Gastrocnemius medialis (tissue), 4 donors: ENCODE measurements at regions of chr15 and their contacts with region 1.

Region 1: DNA sequence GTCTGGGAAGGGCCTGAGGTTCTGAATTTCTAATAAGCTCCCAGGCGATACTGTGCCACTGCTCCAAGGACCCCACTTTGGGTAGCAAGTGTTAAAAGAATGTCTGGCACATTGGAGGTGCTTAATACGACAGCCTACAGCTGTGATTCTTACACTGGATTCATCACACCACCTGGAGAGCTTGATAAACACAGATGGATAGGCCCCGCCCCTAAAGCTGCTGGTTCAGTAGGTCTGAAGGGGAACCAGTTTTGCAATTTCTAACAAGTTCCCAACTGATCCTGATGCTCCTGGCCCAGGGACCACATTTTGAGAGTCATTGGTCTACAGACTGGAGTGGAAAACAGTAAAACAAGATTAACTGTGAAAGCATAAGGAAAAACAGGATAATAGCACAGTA is 124.8 kb upstream of the ST8SIA2 start:
- DNase-seq: no peak
- ATAC-seq: no peak
- H3K4me3 ChIP-seq: no peak overlapping the region
- H3K27ac ChIP-seq: no peak overlapping the region
- H3K4me1 ChIP-seq: no peaks in the 10 kb centered on the region
- H3K27me3 ChIP-seq: peaks cover 0 to 3% (median 2%) of the 10 kb centered on the region in 3 donors
- CTCF ChIP-seq: no peak
- POLR2A ChIP-seq: no peak

Region 2: GRCh38 chr15:92158434-92158833 is 110.5 kb before region 1 on chr15:
- in situ Hi-C with region 1: loop called in 1 of 4 experiments (anchors 25 kb)
- intact Hi-C with region 1: no loop called
- DNase-seq: no peak
- ATAC-seq: no peak
- H3K4me3 ChIP-seq: no peak overlapping the region
- H3K27ac ChIP-seq: no peak overlapping the region
- H3K4me1 ChIP-seq: no peaks in the 10 kb centered on the region
- H3K27me3 ChIP-seq: no peaks in the 10 kb centered on the region
- CTCF ChIP-seq: no peak
- POLR2A ChIP-seq: no peak

Region 3: DNA sequence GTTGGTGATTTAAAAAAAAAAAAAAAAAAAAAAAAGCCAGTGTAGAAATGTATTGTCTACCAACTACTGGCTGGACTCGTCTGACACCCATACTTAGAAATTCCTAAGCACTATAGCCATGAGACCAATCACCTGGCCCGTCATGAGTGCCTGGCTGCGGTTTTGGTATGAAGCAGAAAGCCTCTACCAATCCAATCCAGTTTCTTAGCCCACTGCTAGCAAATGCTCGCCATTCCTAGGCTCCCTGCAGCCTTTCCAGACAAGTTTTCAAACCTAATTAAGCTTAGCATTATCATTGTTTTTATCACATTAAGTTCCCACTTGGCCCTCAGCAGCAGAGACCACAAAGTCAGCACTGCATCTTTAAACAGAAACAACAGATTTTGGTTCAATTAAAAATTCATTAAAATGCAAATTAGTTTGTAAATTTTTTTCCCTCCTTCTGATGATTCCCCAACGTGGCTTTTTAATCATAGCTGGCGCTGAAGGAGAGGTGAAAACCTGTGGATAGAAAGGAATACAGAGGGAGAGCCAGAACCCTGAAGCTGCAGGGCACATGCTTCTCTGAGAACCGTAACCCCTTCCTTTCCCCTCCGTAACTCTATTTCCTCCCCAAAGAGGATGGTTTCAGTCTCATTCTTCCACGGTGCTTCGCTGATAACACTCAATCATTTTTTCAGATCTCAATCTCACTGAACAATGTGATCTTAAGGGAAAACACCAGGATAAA is 92.6 kb after region 1 on chr15:
- in situ Hi-C with region 1: no loop called
- intact Hi-C with region 1: no loop called
- DNase-seq: no peak
- ATAC-seq: no peak
- H3K4me3 ChIP-seq: no peak overlapping the region
- H3K27ac ChIP-seq: no peak overlapping the region
- H3K4me1 ChIP-seq: no peaks in the 10 kb centered on the region
- H3K27me3 ChIP-seq: no peaks in the 10 kb centered on the region
- CTCF ChIP-seq: no peak
- POLR2A ChIP-seq: no peak

Region 4: DNA sequence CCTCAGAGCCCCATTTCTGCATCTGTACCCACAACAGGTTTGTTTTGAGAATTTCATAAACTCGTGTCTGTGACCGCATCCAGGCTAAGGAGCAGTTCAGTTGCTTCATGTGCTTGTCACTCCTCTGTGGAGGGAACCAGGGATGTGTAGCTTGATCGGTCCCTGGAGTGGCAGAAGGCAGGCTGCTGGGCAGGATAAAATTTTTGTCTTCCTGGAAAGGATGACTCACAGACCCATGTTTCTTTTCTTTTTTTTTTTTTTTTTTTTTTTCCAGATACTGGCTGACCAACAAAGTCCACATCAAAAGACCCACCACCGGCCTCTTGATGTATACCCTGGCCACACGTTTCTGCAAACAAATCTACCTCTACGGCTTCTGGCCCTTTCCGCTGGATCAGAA is 194.9 kb after region 1 on chr15:
- in situ Hi-C with region 1: no loop called
- intact Hi-C with region 1: no loop called
- DNase-seq: no peak
- ATAC-seq: no peak
- H3K4me3 ChIP-seq: no peak overlapping the region
- H3K27ac ChIP-seq: no peak overlapping the region
- H3K4me1 ChIP-seq: no peaks in the 10 kb centered on the region
- H3K27me3 ChIP-seq: no peaks in the 10 kb centered on the region
- CTCF ChIP-seq: no peak
- POLR2A ChIP-seq: no peak